Endothelial cell of umbilical vein (primary cell): ENCODE measurements at regions of chr12 and their contacts with region 1.

Region 1: DNA sequence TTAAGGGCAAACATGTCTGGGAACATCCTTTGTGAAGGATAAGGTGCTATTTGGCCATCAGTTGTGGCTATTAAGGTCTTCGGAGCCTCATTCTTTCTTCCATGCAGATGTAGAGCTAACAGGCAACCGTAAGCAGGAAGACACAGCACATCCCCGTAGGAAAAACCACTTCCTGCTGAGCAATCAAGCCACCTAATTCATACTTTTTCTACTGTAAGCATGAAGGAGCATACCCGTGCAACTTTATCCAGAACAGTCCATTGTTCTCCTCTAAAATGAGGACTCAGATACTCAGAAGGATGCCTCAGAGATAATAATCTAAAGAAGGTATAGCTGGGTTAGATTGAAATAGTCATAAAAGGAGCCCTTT is 232.0 kb downstream of the PPM1H start:
- DNase-seq: peak; percentile 59
- H3K4me3 ChIP-seq: no peak overlapping the region
- H3K27ac ChIP-seq: peak overlapping the region; percentile 57
- H3K4me1 ChIP-seq: peaks cover 35% of the 10 kb centered on the region
- H3K27me3 ChIP-seq: no peaks in the 10 kb centered on the region
- CTCF ChIP-seq: no peak
- POLR2A ChIP-seq: no peak

Region 2: GRCh38 chr12:62466594-62467491 is 236.2 kb before region 1 on chr12 and contains the start of gene MON2:
- CTCF ChIA-PET with region 1: no interaction called
- POLR2A ChIA-PET with region 1: interaction called, 4 read pairs
- dilution Hi-C with region 1: no loop called
- intact Hi-C with region 1: loop called (anchors 1 kb)
- DNase-seq: peak; percentile 89
- H3K4me3 ChIP-seq: peak within 1 kb of the TSS; percentile 83 to 90 (median 88)
- H3K27ac ChIP-seq: peak within 1 kb of the TSS; percentile 92
- H3K4me1 ChIP-seq: peaks cover 9% of the 10 kb centered on the region
- H3K27me3 ChIP-seq: peaks cover 0 to 2% of the 10 kb centered on the region in 2 experiments
- CTCF ChIP-seq: no peak
- POLR2A ChIP-seq: peak; percentile 92
- total RNA-seq, gene MON2: 41.8 and 43.0 TPM in 2 replicates

Region 3: DNA sequence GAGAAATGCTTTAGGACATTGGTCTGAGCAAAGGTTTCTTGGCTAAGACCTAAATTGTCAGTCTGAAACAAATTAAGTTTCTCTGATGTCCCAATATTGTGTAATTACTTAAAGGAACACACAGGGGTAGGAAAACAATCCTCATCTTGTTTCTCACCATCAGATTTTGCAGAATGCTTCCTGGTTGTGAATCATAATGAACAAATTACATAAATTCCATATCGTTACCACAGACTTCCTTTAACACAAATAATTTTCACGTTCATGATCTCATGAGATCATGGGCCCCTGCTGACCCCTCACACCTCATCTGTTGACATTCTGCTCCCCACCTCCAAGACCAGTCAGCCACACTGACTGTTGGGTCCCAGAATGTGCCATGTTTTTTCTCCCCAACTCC is 42.2 kb before region 1 on chr12:
- CTCF ChIA-PET with region 1: interaction called, 4 read pairs
- POLR2A ChIA-PET with region 1: no interaction called
- dilution Hi-C with region 1: no loop called
- intact Hi-C with region 1: loop called (anchors 2 kb)
- DNase-seq: peak; percentile 84
- H3K4me3 ChIP-seq: no peak overlapping the region
- H3K27ac ChIP-seq: peak overlapping the region; percentile 55
- H3K4me1 ChIP-seq: peaks cover 27% of the 10 kb centered on the region
- H3K27me3 ChIP-seq: no peaks in the 10 kb centered on the region
- CTCF ChIP-seq: no peak
- POLR2A ChIP-seq: no peak

Region 4: DNA sequence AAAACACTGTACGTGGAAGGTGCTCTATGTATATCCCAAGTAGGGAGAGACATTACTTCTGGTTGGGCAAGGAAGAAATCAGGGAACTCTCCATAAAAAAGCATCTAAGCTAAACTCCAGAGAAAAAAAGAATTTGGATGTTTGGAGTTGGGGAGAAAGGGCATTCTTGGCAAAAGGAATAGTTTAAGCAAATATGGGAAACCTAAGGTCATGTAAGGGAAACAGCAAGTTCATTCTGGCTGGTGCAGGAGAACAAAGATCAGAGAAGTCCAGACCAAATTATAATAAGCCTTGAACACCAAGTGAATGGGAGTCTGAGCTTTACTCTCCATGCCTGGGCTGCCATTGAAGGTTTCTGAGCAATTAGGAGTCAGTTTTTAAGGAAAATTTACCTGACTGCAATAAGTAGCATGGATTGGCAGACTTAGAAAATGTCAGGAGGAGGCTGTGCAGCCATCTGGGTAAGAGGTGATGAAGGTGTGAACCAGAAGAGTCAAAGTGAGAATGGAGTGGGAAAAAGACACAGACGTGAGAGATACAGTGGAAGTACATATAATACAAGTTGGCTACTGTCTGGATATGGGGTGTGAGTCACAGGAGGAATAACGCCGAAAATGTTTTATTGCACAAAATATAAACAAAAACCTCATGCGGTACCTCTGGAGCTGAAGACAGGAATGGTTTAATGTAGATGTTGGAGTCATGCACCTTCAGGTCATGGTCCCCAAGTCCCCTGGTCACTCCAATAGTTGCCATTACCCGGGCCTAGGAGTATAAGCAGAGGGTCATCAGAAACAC is 13.8 kb before region 1 on chr12:
- CTCF ChIA-PET with region 1: interaction called, 11 read pairs
- POLR2A ChIA-PET with region 1: interaction called, 3 read pairs
- dilution Hi-C with region 1: no loop called
- intact Hi-C with region 1: no loop called
- DNase-seq: no peak
- H3K4me3 ChIP-seq: no peak overlapping the region
- H3K27ac ChIP-seq: no peak overlapping the region
- H3K4me1 ChIP-seq: no peaks in the 10 kb centered on the region
- H3K27me3 ChIP-seq: no peaks in the 10 kb centered on the region
- CTCF ChIP-seq: no peak
- POLR2A ChIP-seq: no peak

Region 5: GRCh38 chr12:62724947-62725447 is 22.0 kb after region 1 on chr12:
- CTCF ChIA-PET with region 1: interaction called, 6 read pairs
- POLR2A ChIA-PET with region 1: no interaction called
- dilution Hi-C with region 1: no loop called
- intact Hi-C with region 1: loop called (anchors 1 kb)
- DNase-seq: peak; percentile 92
- H3K4me3 ChIP-seq: no peak overlapping the region
- H3K27ac ChIP-seq: peak overlapping the region; percentile 93
- H3K4me1 ChIP-seq: peaks cover 23% of the 10 kb centered on the region
- H3K27me3 ChIP-seq: no peaks in the 10 kb centered on the region
- CTCF ChIP-seq: no peak
- POLR2A ChIP-seq: no peak